Naive thymus-derived CD4-positive, alpha-beta T cell (primary cell): ENCODE measurements at regions of chr10 and their contacts with region 1.

Region 1: GRCh38 chr10:11264296-11265048 is 246.8 kb downstream of the CELF2 start:
- DNase-seq: no peak
- ATAC-seq: no peak
- H3K4me3 ChIP-seq: no peak overlapping the region
- H3K4me3 Mint-ChIP-seq: peak overlapping the region in 4 of 10 donors; percentile 13 to 38 (median 34)
- H3K27ac ChIP-seq: peak overlapping the region; percentile 22
- H3K27ac Mint-ChIP-seq: peak overlapping the region in 8 of 9 donors; percentile 57 to 87 (median 74)
- H3K4me1 ChIP-seq: peaks cover 18 to 22% of the 10 kb centered on the region in 2 donors
- H3K4me1 Mint-ChIP-seq: peaks cover 58 to 99% (median 94%) of the 10 kb centered on the region in 7 donors
- H3K27me3 ChIP-seq: no peaks in the 10 kb centered on the region
- H3K27me3 Mint-ChIP-seq: no peaks in the 10 kb centered on the region

Region 2: DNA sequence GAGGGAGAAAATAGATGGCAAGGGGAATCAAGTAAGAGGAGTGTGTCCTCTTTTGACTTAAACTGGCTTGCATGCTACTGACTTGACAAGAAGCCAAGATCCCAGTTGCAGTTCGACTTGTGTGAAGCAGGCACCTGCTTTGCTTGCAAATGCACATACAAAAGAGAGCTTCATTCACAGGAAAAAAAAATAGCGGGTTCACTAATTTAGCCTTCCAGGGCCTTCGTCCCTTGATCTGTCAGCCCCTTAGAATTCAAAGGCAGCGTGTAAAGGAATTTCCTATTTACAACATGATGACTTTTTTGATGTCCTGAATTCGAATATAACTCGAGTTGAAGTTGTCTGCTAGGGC is 54.7 kb before region 1 on chr10:
- CTCF ChIA-PET with region 1: no interaction called
- POLR2A ChIA-PET with region 1: no interaction called
- intact Hi-C with region 1: no loop called
- DNase-seq: peak in 4 of 9 donors; percentile 26 to 44 (median 31)
- ATAC-seq: no peak
- H3K4me3 ChIP-seq: peak overlapping the region; percentile 39
- H3K4me3 Mint-ChIP-seq: peak overlapping the region; percentile 73 to 89 (median 82)
- H3K27ac ChIP-seq: peak overlapping the region; percentile 70
- H3K27ac Mint-ChIP-seq: peak overlapping the region; percentile 81 to 94 (median 87)
- H3K4me1 ChIP-seq: peaks cover 75 to 93% of the 10 kb centered on the region in 2 donors
- H3K4me1 Mint-ChIP-seq: peaks cover 76 to 100% (median 98%) of the 10 kb centered on the region in 7 donors
- H3K27me3 ChIP-seq: no peaks in the 10 kb centered on the region
- H3K27me3 Mint-ChIP-seq: no peaks in the 10 kb centered on the region

Region 3: GRCh38 chr10:11245510-11245909 is 19.0 kb before region 1 on chr10:
- CTCF ChIA-PET with region 1: no interaction called
- POLR2A ChIA-PET with region 1: interaction called, 4 read pairs
- intact Hi-C with region 1: loop called in 1 of 2 experiments (anchors 2 kb)
- DNase-seq: no peak
- ATAC-seq: no peak
- H3K4me3 ChIP-seq: no peak overlapping the region
- H3K4me3 Mint-ChIP-seq: no peak overlapping the region
- H3K27ac ChIP-seq: peak overlapping the region; percentile 2
- H3K27ac Mint-ChIP-seq: no peak overlapping the region
- H3K4me1 ChIP-seq: peaks cover 33 to 58% of the 10 kb centered on the region in 2 donors
- H3K4me1 Mint-ChIP-seq: peaks cover 28 to 66% (median 44%) of the 10 kb centered on the region in 7 donors
- H3K27me3 ChIP-seq: no peaks in the 10 kb centered on the region
- H3K27me3 Mint-ChIP-seq: no peaks in the 10 kb centered on the region

Region 4: DNA sequence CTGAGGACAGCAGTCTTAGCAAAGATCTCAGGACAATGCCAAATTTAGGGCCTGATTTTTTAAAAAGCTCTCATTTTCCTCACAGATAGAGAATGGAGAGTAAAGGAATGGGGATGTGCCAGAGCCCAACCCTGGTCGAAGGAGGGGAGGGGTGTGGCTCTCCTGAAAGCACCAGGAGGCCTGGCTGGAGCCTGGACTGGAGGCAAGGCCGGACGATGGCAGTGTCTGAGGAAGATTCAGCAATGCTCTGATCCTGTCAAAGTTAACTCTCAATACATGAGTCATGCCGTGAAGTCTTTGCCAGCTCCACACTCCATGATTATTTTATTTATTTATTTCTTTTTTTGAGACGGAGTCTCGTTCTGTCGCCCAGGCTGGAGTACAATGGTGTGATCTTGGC is 669.8 kb after region 1 on chr10:
- CTCF ChIA-PET with region 1: no interaction called
- POLR2A ChIA-PET with region 1: no interaction called
- intact Hi-C with region 1: no loop called
- DNase-seq: no peak
- ATAC-seq: no peak
- H3K4me3 ChIP-seq: no peak overlapping the region
- H3K4me3 Mint-ChIP-seq: no peak overlapping the region
- H3K27ac ChIP-seq: no peak overlapping the region
- H3K27ac Mint-ChIP-seq: peak overlapping the region in 1 of 9 donors; percentile 18
- H3K4me1 ChIP-seq: no peaks in the 10 kb centered on the region
- H3K4me1 Mint-ChIP-seq: peaks cover 0 to 2% (median 0%) of the 10 kb centered on the region in 7 donors
- H3K27me3 ChIP-seq: no peaks in the 10 kb centered on the region
- H3K27me3 Mint-ChIP-seq: no peaks in the 10 kb centered on the region